HepG2 (cell line): ENCODE measurements at regions of chr17 and their contacts with region 1.

Region 1: DNA sequence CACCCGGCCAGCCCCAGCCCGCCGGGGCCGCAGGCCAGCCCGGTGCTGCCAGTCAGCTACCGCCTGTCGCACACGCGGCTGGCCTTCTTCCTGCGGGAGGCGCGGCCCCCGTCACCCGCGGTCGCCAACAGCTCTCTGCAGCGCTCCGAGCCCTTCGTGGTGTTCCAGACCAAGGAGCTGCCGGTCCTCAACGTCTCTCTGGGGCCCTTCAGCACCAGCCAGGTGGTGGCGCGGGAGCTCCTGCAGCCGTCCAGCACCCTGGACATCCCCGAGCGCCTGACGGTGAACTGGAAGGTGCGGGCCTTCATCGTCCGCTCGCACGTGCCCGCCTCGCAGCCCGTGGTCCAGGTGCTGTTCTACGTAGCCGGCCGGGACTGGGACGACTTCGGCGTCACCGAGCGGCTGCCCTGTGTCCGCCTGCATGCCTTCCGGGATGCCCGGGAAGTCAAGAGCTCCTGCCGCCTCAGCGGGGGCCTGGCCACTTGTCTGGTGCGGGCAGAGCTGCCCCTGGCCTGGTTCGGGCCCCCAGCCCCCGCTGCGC is 46.8 kb downstream of the TMEM132E start:
- DNase-seq: no peak
- ATAC-seq: peak; percentile 25; the same call in 1 of the 3 replicates
- H3K4me3 ChIP-seq: no peak overlapping the region
- H3K27ac ChIP-seq: no peak overlapping the region
- H3K4me1 ChIP-seq: no peaks in the 10 kb centered on the region
- H3K27me3 ChIP-seq: peaks cover 2 to 33% of the 10 kb centered on the region in 2 experiments; a peak in 3 of 5 replicates
- CTCF ChIP-seq: no peak
- EP300 ChIP-seq: no peak
- POLR2A ChIP-seq: no peak
- RAD21 ChIP-seq: no peak

Region 2: GRCh38 chr17:34579017-34579946 is 46.9 kb before region 1 on chr17 and contains the start of gene TMEM132E:
- CTCF ChIA-PET with region 1: no interaction called
- POLR2A ChIA-PET with region 1: no interaction called
- in situ Hi-C with region 1: loop called (anchors 5 kb)
- intact Hi-C with region 1: no loop called
- DNase-seq: no peak
- ATAC-seq: no peak
- H3K4me3 ChIP-seq: no peak within 1 kb of the TSS; a peak in 1 of 6 replicates
- H3K27ac ChIP-seq: no peak within 1 kb of the TSS
- H3K4me1 ChIP-seq: no peaks in the 10 kb centered on the region
- H3K27me3 ChIP-seq: peaks cover 7 to 67% of the 10 kb centered on the region in 2 experiments
- CTCF ChIP-seq: no peak
- EP300 ChIP-seq: no peak
- POLR2A ChIP-seq: no peak
- RAD21 ChIP-seq: no peak
- total RNA-seq, gene TMEM132E: not detected in 2 replicates

Region 3: DNA sequence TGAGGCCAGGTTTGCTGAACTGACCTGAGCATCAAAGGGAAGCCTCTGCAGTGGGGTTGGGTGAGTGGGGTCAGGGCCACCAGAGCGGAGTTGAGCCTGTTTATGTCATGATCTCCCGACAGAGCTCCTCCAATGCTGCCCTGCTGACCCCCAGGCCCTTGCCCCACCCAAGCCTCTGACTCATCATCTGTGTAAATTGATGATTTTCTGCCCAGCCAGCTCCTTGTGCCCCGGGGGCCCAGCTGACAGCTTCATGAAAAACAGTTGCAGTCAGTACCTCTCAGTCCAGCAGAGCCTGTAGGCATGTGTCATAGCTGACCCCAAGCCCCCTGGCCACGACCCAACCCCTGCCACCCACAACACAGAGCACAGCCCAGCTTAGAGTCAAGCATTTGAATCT is 200.1 kb after region 1 on chr17:
- CTCF ChIA-PET with region 1: no interaction called
- POLR2A ChIA-PET with region 1: no interaction called
- in situ Hi-C with region 1: no loop called
- intact Hi-C with region 1: no loop called
- DNase-seq: no peak
- ATAC-seq: no peak
- H3K4me3 ChIP-seq: no peak overlapping the region
- H3K27ac ChIP-seq: no peak overlapping the region
- H3K4me1 ChIP-seq: no peaks in the 10 kb centered on the region
- H3K27me3 ChIP-seq: no peaks in the 10 kb centered on the region; a peak in 1 of 5 replicates
- CTCF ChIP-seq: no peak
- EP300 ChIP-seq: no peak
- POLR2A ChIP-seq: no peak
- RAD21 ChIP-seq: no peak